GM23248 (cell line): ENCODE measurements at regions of chr4 and their contacts with region 1.

Region 1: GRCh38 chr4:112604589-112604988 is 32.1 kb downstream of the ZGRF1 start:
- DNase-seq: peak; percentile 71
- H3K4me3 ChIP-seq: no peak overlapping the region
- H3K27ac ChIP-seq: no peak overlapping the region
- H3K4me1 ChIP-seq: no peaks in the 10 kb centered on the region
- H3K27me3 ChIP-seq: no peaks in the 10 kb centered on the region

Region 2: GRCh38 chr4:112141366-112142138 is 463.0 kb before region 1 on chr4:
- in situ Hi-C with region 1: no loop called
- DNase-seq: no peak
- H3K4me3 ChIP-seq: no peak overlapping the region
- H3K27ac ChIP-seq: no peak overlapping the region
- H3K4me1 ChIP-seq: peaks cover 3% of the 10 kb centered on the region
- H3K27me3 ChIP-seq: no peaks in the 10 kb centered on the region

Region 3: GRCh38 chr4:112348488-112349158 is 256.0 kb before region 1 on chr4:
- in situ Hi-C with region 1: loop called (anchors 10 kb)
- DNase-seq: peak; percentile 87
- H3K4me3 ChIP-seq: peak overlapping the region; percentile 65
- H3K27ac ChIP-seq: peak overlapping the region; percentile 40
- H3K4me1 ChIP-seq: no peaks in the 10 kb centered on the region
- H3K27me3 ChIP-seq: no peaks in the 10 kb centered on the region

Region 4: DNA sequence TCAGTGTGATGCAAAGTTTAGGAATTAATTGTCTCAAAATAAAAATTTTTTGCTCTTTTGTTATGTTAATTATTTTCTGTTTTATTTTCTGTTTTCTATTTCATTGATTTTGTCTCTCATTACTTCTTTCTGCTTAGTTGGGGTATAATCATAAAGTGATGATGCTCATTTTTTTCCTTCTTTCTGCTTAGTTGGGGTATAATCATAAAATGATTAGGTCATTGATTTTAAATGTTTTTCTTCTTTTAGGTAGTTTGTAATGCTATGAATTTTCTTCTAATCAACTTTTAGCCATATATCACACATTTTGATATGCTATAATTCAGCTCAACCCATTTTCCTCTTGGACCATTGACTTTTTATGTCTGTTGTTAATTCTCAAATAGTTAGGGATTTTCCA is 132.3 kb before region 1 on chr4:
- in situ Hi-C with region 1: no loop called
- DNase-seq: no peak
- H3K4me3 ChIP-seq: no peak overlapping the region
- H3K27ac ChIP-seq: no peak overlapping the region
- H3K4me1 ChIP-seq: no peaks in the 10 kb centered on the region
- H3K27me3 ChIP-seq: 0 out of 2 replicates have a peak, but pooled peaks cover 3% of the 10 kb centered on the region